ENCODE measurements at regions of chr9 and their contacts with region 1.

Region 1: DNA sequence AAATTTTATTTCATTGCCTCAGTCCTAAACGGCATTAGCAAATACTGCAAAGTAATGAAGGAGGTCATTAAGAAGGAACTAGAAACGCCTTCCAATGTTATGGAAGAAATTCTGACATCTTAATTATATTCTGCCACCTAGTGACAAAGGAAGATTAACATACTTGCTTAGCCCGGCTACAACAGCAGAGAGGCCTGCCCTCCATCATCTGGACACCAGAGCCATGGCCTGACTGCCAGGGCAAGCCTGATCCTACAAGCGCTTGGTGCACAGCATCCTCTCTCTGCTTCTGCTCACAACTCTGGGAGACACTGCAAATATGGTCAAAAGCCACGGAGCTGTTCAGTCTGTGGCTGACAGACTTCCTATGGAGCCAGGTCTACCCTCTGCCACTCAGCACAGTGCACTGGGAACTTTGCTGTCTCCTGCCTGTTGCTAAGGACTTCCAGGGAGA is 87.3 kb upstream of the SLC44A1 start:
- DNase-seq: no peak
- ATAC-seq: peak; percentile 88

Region 2: DNA sequence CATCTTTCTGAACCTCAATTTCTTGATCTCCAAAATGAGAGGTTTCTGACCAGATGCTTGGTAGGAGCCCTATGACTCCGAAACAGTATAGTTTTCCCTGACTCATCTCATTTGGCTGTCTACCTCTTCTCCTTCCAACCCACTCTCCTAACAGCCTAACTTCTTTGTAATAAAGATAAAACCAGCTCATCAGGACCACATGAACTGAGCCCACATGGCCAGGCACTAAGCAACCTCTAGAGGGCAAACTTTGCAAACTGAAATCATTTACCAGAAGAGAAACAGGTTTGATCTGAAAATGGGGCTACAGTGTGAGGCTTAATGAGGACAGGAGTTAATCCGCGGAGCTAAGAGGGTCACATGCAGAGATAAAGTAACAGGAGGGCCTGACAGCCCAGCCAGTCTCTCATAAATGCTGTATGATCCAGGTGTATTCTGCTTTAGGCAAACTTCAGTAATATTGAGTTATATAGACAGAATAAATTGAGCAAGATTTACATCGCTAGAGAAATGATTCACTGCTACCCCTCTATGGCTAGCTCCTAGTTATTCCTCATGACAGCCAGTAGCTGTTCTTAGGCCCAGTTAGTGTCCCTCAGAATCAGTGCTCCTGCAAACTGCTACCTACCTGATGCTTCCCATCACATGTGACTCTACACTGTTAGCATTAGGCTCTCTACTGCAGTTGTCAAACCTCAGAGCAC is 293.8 kb before region 1 on chr9:
- intact Hi-C with region 1: loop called (anchors 2 kb)
- DNase-seq: no peak
- ATAC-seq: peak; percentile 73

Region 3: DNA sequence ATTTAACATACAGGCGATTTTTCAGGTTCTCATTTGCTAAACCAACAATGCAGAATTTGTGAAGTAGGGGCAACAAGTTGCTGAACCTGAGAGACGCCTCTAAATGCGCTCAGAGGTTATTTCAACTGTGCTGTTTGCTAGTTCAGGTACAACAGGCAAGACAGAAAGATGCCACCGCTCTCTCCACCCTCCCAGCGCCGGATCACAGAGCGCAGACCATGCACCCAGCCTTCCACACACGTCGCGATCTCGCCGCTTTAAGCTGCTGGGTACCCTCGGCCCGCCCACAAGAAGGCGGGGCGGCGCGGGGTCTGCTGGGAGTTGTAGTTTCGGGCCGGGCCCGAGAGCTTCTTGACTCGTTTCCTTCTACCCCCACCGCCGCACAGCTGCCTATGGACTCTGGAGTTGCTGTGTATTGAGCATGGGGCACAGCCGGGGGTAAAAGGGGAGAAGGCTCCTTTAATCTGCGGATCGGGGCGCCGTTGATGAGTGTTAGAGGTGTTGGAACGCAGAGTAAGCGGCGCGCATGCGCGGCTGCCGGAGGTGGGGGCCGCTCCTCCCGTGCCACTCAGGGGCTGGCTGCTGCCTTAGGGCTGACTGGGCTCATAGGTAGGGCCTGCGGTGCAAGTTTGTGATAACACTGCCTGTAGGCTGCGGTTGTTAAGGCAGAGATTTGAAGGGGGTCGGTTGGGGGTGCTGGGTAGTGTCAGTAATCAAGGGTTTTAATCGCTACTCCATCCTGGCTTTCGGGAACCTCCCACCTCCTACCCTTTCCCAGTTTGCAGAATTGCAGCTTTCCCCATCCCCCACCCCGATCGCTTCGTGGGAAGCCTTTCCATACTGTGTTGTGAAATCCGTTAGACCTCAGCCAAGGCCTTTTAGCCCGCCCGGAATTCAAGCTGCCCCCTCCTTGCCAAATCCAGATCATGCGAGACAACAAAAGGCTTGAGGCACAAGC is 188.9 kb before region 1 on chr9:
- intact Hi-C with region 1: loop called (anchors 2 kb)
- DNase-seq: peak; percentile 96
- ATAC-seq: peak; percentile 94

Region 4: GRCh38 chr9:105127863-105128220 is 29.3 kb before region 1 on chr9:
- intact Hi-C with region 1: no loop called
- DNase-seq: no peak
- ATAC-seq: no peak

Region 5: DNA sequence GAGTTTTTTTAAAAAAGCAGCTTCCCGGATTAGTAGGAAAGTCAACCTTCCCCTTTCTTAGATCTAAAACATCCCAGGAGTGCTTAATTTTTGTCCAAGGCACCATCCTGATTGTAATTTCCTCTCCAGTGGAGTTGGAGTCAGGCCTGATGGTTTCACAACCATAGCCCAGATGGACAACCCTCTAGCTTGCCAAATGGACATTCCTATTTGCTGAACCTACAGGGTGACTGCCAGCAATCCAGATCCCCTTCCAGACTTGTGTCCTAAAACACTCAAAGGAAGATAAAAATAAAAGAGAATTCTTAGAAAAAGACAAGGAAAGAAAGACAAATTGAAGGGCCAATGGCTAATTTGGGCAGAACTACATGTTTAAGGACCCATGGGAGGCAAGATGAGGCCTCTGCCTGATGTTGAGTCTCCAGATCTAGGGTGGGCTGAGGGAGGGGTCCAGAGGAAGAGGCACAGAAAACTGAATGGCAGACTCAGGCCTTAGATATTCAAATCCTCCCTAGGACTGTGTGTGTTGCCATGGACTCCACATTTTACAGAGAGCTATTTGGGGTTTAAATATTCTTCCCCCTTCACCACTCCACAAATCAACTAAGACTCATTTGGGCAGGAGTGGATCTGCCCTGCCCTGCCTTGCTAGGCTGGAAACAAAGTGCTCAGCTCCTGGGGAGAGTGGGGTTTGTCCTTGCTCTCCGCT is 48.8 kb after region 1 on chr9:
- intact Hi-C with region 1: no loop called
- DNase-seq: no peak
- ATAC-seq: peak; percentile 96

Region 6: GRCh38 chr9:105264380-105264779 is 107.2 kb after region 1 on chr9:
- intact Hi-C with region 1: no loop called
- DNase-seq: no peak
- ATAC-seq: no peak

Region 7: DNA sequence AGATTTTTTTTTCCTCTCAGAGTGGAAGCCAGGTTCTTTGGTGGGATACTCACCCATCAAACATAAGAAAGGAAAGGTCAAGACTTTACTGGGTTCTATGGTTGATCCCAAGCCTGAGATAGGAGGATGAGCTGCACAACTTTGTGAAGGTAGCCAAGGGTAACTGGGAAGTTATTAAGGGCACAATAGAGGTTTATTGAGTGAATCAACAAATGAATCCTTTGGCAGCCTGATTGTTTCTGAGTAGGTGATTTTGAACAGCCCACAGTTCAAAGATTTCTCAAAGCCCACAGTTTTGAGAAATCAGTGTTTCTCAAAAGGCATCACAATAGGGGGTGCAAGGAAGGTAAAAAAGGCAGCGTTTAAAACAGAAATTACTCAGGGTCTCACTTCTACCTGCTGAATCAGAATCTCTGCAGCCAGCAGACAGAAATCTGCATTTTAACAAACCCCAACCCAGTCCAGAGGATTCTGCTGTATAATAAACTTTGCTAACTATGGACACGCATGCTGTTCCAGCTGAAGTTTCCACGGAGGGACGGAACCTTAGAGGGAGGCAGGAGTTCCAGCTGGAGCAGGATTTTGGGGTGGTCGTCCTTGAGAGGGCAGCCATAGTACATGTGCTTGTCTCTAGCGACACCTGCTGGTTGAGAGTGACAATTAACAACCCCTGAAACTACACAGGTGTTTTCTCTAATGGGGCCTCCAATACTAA is 257.9 kb after region 1 on chr9:
- intact Hi-C with region 1: loop called (anchors 2 kb)
- DNase-seq: no peak
- ATAC-seq: no peak

Measured in Right ventricle myocardium inferior (tissue), 1 donor.